PC-9 (cell line): ENCODE measurements at regions of chr2 and their contacts with region 1.

Region 1: DNA sequence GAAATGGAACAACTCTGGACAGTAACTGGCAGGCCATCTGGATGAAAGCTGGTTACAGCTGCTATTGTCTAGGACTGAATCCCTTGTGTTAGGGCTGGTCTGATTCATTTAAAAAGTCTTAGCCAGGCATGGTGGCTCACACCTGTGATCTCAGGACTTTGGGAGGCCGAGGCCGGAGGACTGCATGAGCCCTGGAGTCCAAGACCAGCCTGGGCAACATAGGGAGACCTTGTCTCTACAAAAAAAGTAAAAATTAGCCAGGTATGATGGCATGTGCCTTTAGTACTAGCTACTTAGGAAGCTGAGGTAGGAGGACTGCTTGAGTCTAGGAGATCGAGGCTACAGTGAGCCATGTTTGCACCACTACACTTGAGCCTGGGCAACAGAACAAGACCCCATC is 15.5 kb upstream of the CFLAR start:
- DNase-seq: no peak
- H3K4me3 ChIP-seq: no peak overlapping the region
- H3K27ac ChIP-seq: no peak overlapping the region
- H3K4me1 ChIP-seq: no peaks in the 10 kb centered on the region
- H3K27me3 ChIP-seq: no peaks in the 10 kb centered on the region
- CTCF ChIP-seq: no peak

Region 2: GRCh38 chr2:200089758-200090109 is 1010.8 kb before region 1 on chr2:
- CTCF ChIA-PET with region 1: no interaction called
- POLR2A ChIA-PET with region 1: interaction called, 12 read pairs
- intact Hi-C with region 1: no loop called
- DNase-seq: no peak
- H3K4me3 ChIP-seq: no peak overlapping the region
- H3K27ac ChIP-seq: no peak overlapping the region
- H3K4me1 ChIP-seq: no peaks in the 10 kb centered on the region
- H3K27me3 ChIP-seq: no peaks in the 10 kb centered on the region
- CTCF ChIP-seq: no peak